Body of pancreas (tissue), 4 donors: ENCODE measurements at regions of chr13 and their contacts with region 1.

Region 1: GRCh38 chr13:24053519-24054251 is 106.8 kb upstream of the SPATA13 start:
- DNase-seq: peak; percentile 76 to 82 (median 82)
- ATAC-seq: peak; percentile 95
- H3K4me3 ChIP-seq: no peak overlapping the region
- H3K27ac ChIP-seq: peak overlapping the region; percentile 33 to 66 (median 52)
- H3K4me1 ChIP-seq: peaks cover 31% of the 10 kb centered on the region
- H3K27me3 ChIP-seq: no peaks in the 10 kb centered on the region
- CTCF ChIP-seq: peak; percentile 62 to 93 (median 88)
- POLR2A ChIP-seq: no peak

Region 2: GRCh38 chr13:23810685-23811240 is 242.9 kb before region 1 on chr13:
- intact Hi-C with region 1: no loop called
- DNase-seq: no peak
- ATAC-seq: no peak
- H3K4me3 ChIP-seq: no peak overlapping the region
- H3K27ac ChIP-seq: no peak overlapping the region
- H3K4me1 ChIP-seq: no peaks in the 10 kb centered on the region
- H3K27me3 ChIP-seq: no peaks in the 10 kb centered on the region
- CTCF ChIP-seq: no peak
- POLR2A ChIP-seq: no peak

Region 3: GRCh38 chr13:23934520-23934919 is 119.2 kb before region 1 on chr13:
- intact Hi-C with region 1: no loop called
- DNase-seq: no peak
- ATAC-seq: no peak
- H3K4me3 ChIP-seq: no peak overlapping the region
- H3K27ac ChIP-seq: no peak overlapping the region
- H3K4me1 ChIP-seq: no peaks in the 10 kb centered on the region
- H3K27me3 ChIP-seq: no peaks in the 10 kb centered on the region
- CTCF ChIP-seq: no peak
- POLR2A ChIP-seq: no peak

Region 4: GRCh38 chr13:24160454-24161009 is 106.8 kb after region 1 on chr13 and contains the start of gene SPATA13:
- intact Hi-C with region 1: loop called (anchors 10 kb)
- DNase-seq: peak; percentile 95 to 99 (median 98)
- ATAC-seq: peak; percentile 90
- H3K4me3 ChIP-seq: peak within 1 kb of the TSS; percentile 74 to 97
- H3K27ac ChIP-seq: peak within 1 kb of the TSS; percentile 97 to 100 (median 98)
- H3K4me1 ChIP-seq: peaks cover 43% of the 10 kb centered on the region
- H3K27me3 ChIP-seq: no peaks in the 10 kb centered on the region
- CTCF ChIP-seq: peak in 3 of 7 experiments; percentile 7 to 20 (median 14)
- POLR2A ChIP-seq: peak; percentile 95 to 98 (median 97)
- total RNA-seq, gene SPATA13: 83.3 to 359 TPM